ENCODE measurements at regions of chr6 and their contacts with region 1.

Region 1: DNA sequence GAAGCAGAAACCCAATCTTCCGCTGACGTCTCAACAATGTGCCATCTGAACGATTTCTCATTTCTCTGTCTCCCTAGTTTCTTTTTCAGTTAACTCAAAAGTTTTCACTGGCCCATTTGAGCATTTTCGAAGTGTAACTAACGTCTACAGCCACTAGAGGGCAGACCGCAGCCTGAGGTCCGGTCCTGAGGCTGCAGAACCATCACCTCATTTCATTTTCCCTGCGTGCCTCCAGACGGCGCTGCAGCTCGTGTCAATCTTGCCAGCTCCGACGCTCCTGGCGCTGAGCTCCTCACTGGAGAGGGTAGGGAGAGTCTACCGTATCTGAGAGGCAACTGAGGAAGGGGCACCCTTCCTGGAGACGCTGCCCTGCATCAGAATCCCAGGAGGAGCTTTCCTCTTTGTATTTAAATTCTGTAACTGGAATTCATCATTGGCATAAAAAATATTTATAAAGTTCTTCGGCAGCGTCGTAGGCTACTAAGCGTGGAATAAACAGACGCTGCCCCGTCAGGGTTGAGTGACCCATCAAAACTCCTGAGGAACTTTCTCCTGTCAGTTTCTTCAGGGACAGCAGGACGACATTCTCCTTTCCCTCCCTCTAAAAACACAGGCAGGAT is 28.5 kb upstream of the DTNBP1 start:
- DNase-seq: peak; percentile 91 to 94
- ATAC-seq: peak; percentile 98
- H3K4me3 ChIP-seq: peak overlapping the region; percentile 74 to 75
- H3K27ac ChIP-seq: no peak overlapping the region
- H3K4me1 ChIP-seq: no peaks in the 10 kb centered on the region
- H3K27me3 ChIP-seq: no peaks in the 10 kb centered on the region

Region 2: DNA sequence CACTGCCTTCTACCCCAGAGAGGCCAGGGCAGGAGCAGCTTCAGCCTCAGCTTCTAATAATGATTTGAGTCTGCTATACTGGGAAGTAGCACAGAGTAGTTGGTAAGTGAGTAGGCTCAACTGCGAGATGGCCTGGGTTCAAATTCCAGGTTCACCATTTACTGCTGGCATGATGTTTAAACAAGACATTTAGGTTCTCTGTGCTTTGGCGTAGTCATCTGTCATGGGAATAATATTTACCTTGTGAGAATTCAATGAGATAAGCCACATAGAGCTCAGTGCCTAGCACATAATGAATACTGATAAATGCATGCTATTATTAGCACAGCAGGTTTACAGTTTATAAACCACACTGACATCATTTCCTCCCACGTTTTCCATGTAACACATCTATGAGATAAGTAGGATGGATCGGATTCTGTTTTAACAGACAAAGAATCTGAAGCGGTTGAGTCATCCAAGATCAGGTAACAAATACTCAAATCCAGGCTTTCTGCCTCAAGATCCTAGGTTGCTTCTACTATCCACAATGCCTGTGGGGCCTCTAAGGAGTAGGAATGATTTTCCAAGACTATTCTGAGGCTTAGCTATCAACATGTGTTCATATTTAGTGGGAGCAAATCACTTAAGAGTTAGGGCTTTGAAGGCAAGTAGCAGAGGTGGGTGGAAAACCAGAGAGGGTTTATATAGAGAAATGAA is 44.4 kb after region 1 on chr6:
- intact Hi-C with region 1: no loop called
- DNase-seq: no peak
- ATAC-seq: no peak
- H3K4me3 ChIP-seq: no peak overlapping the region
- H3K27ac ChIP-seq: no peak overlapping the region
- H3K4me1 ChIP-seq: peaks cover 0 to 2% of the 10 kb centered on the region in 2 donors
- H3K27me3 ChIP-seq: no peaks in the 10 kb centered on the region

Region 3: DNA sequence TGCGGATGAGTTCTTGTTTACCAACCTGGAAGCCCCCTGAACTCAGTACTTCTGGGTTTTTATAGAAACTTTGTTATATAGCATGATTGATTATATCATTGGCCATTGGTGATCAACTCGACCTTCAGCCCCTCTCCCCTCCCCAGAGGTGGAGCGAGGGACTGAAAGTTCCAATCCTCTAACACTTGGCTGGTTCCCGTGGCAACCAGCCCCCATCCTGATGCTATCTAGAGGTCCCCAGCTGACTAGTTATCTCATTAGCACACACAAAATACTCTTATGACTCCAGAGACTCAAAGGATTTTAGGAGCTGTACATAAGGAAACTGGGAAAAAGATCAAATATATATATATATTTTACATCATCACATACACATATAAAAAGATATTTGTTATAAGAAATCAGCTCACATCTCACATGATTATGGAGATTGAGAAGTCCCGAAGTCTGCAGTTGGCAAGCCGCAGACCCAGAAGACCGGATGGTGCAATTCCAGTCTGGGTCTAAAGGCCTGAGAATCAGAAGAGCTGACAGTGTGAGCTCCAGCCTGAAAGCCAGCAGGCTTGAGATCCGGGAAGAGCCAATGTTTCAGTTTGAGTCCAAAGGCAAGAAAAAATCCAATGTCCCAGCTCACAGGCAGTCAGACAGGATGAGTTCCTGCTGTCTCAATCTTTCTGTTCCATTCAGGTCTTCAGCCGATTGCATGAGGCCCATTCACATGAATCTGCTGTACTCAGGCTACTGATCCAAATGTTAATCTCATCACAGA is 150.8 kb after region 1 on chr6:
- intact Hi-C with region 1: no loop called
- DNase-seq: no peak
- ATAC-seq: peak; percentile 65
- H3K4me3 ChIP-seq: no peak overlapping the region
- H3K27ac ChIP-seq: peak overlapping the region in 1 of 2 donors; percentile 18
- H3K4me1 ChIP-seq: peaks cover 0 to 4% of the 10 kb centered on the region in 2 donors
- H3K27me3 ChIP-seq: no peaks in the 10 kb centered on the region

Region 4: GRCh38 chr6:16206595-16207037 is 515.3 kb after region 1 on chr6:
- intact Hi-C with region 1: loop called (anchors 1 to 5 kb)
- DNase-seq: no peak
- ATAC-seq: peak; percentile 93
- H3K4me3 ChIP-seq: no peak overlapping the region
- H3K27ac ChIP-seq: peak overlapping the region; percentile 48 to 80
- H3K4me1 ChIP-seq: peaks cover 0 to 2% of the 10 kb centered on the region in 2 donors
- H3K27me3 ChIP-seq: no peaks in the 10 kb centered on the region

Measured in aorta (tissue), 5 donors.